Activated T-helper 1 cell treated with anti-CD3 and anti-CD28 coated beads, Interleukin-12 subunit alpha, Interleukin-12 subunit beta, Interleukin-2, Interleukin-4 antibody, amounts not matched to agents 30 ng/mL and 10 ng/mL and 1 ng/mL, durations not matched to agents 14 hours and 24 hours and 36 hours (primary cell): ENCODE measurements at regions of chr6 and their contacts with region 1.

Region 1: GRCh38 chr6:16712931-16713484 is 48.3 kb downstream of the ATXN1 start:
- DNase-seq: no peak
- H3K4me3 Mint-ChIP-seq: peak overlapping the region; percentile 60
- H3K27ac Mint-ChIP-seq: peak overlapping the region; percentile 88
- H3K4me1 Mint-ChIP-seq: peaks cover 65% of the 10 kb centered on the region
- H3K27me3 Mint-ChIP-seq: no peaks in the 10 kb centered on the region

Region 2: DNA sequence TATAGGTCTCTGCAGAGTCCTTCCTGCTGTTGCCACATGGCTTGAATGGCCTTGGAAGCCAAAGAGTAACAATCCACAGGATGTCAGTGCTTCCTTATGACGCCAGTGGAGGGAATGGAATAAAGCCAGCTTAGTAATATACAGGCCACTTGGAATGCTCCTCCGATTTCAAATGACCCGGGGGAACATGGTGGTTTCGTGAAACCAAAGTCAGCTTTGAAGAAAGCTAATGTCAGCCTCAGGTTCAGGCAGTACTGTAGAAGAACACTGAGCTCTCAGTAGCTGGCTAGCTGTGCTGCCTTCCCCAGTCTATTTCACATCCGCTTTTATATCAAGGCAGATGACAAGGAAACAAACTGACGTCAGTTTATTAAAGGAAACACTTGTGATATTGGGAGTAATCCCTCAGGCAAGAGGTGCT is 1239.3 kb before region 1 on chr6:
- intact Hi-C with region 1: no loop called
- DNase-seq: no peak
- H3K4me3 Mint-ChIP-seq: no peak overlapping the region
- H3K27ac Mint-ChIP-seq: no peak overlapping the region
- H3K4me1 Mint-ChIP-seq: peaks cover 23% of the 10 kb centered on the region
- H3K27me3 Mint-ChIP-seq: no peaks in the 10 kb centered on the region

Region 3: GRCh38 chr6:16602035-16602434 is 111.0 kb before region 1 on chr6:
- intact Hi-C with region 1: loop called (anchors 1 kb)
- DNase-seq: no peak
- H3K4me3 Mint-ChIP-seq: peak overlapping the region; percentile 28
- H3K27ac Mint-ChIP-seq: peak overlapping the region; percentile 75
- H3K4me1 Mint-ChIP-seq: peaks cover 49% of the 10 kb centered on the region
- H3K27me3 Mint-ChIP-seq: no peaks in the 10 kb centered on the region

Region 4: GRCh38 chr6:16684896-16685554 is 28.0 kb before region 1 on chr6:
- intact Hi-C with region 1: loop called (anchors 1 kb)
- DNase-seq: peak; percentile 71
- H3K4me3 Mint-ChIP-seq: peak overlapping the region; percentile 43
- H3K27ac Mint-ChIP-seq: peak overlapping the region; percentile 88
- H3K4me1 Mint-ChIP-seq: peaks cover 97% of the 10 kb centered on the region
- H3K27me3 Mint-ChIP-seq: no peaks in the 10 kb centered on the region

Region 5: DNA sequence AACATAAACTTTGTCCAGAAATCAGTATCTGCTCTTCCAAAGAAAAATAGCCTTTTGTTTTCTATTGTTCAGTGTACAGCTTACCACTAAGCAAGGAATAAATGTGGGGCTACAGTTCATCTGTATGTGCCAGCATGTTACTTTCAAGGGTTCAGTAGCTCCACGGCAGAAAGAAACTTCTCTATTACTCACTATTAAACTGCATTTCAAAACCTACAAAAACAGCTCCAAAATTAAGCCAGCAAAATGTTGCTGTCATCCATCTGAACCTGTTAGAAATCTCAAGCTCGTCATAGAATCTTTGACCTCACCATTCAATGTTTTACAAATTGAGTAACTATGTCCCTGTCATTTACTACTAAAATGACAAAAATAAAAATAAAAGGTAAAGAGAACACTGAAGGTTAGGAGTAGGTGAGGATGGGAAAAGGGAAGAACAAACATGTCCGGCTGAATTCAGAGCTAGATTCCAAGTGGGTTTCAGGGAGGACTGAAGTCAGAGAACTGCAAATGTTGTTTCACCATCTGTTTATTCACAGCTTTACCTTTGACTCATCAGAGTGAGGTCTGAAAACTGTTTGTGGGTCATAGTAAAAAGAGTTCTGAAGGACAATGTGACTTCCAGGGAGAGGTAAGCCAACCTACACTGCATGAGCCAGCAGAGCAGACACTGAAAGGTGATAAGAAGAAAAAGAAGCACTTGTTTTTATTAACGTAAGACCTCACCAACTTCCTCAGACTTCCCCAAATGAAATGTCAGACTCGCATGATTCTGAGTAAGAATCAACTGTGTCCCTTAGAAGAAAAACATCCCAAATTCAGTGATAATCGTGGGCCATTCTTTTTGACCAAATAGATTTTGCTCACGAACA is 13.8 kb before region 1 on chr6:
- intact Hi-C with region 1: loop called (anchors 1 kb)
- DNase-seq: no peak
- H3K4me3 Mint-ChIP-seq: peak overlapping the region; percentile 80
- H3K27ac Mint-ChIP-seq: peak overlapping the region; percentile 98
- H3K4me1 Mint-ChIP-seq: peaks cover 74% of the 10 kb centered on the region
- H3K27me3 Mint-ChIP-seq: no peaks in the 10 kb centered on the region

Region 6: DNA sequence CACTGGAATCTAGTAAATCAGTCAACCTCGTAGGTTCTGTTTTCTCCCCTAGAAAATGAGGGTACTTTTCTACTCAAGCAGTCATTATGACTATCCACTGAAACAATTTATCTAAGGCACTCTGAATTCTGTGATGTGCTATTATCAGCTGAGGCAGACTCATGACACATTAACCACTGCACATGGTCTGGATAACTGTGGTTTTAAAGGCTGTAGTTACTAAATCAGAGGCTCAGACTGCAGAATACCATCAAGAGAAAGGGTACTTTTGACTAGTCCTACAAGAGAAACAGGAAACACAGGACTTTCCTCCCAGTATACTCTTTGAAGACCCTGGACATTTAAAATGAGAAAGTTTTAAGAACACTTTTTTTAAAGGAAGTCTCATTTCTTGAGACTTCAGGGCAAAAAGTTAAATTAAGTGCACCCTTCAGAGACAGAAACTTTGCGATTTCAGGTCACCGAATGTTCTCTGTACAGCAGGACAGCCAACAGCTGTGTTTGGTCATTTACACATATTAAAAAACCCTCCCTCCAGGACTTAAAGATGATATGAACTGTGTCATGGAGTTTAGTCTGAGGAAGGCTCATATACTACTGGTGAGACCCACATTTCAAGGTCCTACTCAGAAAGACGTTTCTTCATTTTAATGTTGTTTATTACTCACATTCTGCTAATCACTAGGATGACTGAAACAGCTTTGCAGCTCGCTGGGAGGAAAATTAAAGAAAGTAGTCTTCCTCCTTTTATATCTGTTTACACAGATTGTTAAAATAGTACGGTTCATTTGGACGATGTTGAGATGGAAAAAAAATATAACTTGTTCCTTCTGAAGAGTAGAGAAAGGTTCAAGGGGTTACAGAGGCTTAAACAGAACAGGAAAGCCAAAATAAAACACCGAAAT is 28.4 kb after region 1 on chr6:
- intact Hi-C with region 1: loop called (anchors 1 kb)
- DNase-seq: no peak
- H3K4me3 Mint-ChIP-seq: peak overlapping the region; percentile 42
- H3K27ac Mint-ChIP-seq: peak overlapping the region; percentile 68
- H3K4me1 Mint-ChIP-seq: peaks cover 73% of the 10 kb centered on the region
- H3K27me3 Mint-ChIP-seq: no peaks in the 10 kb centered on the region